Right ventricle myocardium inferior (tissue), 1 donor: ENCODE measurements at regions of chr9 and their contacts with region 1.

Region 1: GRCh38 chr9:32378993-32379729 is 5.3 kb upstream of the ACO1 start:
- DNase-seq: no peak
- ATAC-seq: peak; percentile 87

Region 2: DNA sequence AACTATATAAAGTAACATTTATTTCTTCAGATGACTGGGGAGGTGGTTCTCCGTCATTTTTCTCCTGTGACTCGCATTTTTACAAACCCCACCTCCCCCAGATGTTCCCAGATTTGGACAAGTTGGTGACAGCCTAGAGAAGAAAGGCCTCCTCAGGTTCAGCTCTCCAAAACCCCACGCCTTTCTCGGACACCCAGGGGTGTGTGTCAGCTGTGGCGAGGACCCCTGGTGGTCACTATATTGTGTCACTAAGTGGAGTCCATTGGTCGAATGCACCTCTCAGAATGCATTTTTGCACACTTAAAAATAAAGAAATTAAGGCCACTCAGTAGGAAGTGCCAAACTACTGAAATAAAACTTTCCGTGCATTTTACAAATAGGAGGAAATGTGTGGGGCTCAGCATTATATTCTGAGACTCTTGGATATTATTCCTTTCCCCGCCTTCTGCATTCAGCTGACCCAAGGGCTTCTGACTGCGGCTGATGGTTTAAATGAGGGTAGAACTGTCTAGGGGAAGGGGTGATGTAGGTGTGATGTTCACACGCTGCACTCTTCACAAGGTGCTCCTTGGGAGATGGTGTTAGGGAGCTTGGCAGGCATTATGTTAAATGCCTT is 52.9 kb after region 1 on chr9:
- intact Hi-C with region 1: loop called (anchors 1 kb)
- DNase-seq: no peak
- ATAC-seq: no peak

Region 3: DNA sequence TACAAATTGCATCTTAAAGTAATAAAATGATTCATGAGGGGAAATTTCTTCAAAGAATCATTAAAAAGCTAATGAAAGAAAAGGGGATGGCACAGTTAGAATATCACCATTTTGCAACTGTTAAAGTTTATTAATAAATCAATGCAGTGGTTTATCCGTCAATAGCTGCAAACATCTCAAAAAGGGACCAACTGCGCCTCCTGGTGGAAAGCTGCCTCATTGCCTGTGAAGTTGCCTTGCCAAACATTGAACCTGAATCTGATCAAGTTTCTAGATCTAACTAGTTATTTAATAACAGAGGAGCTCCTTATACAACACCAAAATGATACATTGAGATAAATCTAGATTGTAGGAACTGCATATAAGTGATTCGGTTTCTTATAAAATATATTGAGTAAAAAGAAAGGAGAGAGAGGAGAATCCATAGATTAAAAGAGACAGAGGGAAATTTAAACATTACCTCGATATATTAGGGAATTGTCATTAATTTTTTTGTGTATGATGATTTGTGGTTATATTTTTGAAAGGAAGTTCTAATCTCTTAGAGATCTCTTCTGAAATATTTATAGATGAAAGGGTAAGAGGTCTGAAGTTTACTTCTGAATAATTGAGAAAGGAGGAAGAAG is 200.7 kb after region 1 on chr9:
- intact Hi-C with region 1: loop called (anchors 1 kb)
- DNase-seq: peak; percentile 69
- ATAC-seq: no peak